ENCODE measurements at regions of chr4 and their contacts with region 1.

Region 1: DNA sequence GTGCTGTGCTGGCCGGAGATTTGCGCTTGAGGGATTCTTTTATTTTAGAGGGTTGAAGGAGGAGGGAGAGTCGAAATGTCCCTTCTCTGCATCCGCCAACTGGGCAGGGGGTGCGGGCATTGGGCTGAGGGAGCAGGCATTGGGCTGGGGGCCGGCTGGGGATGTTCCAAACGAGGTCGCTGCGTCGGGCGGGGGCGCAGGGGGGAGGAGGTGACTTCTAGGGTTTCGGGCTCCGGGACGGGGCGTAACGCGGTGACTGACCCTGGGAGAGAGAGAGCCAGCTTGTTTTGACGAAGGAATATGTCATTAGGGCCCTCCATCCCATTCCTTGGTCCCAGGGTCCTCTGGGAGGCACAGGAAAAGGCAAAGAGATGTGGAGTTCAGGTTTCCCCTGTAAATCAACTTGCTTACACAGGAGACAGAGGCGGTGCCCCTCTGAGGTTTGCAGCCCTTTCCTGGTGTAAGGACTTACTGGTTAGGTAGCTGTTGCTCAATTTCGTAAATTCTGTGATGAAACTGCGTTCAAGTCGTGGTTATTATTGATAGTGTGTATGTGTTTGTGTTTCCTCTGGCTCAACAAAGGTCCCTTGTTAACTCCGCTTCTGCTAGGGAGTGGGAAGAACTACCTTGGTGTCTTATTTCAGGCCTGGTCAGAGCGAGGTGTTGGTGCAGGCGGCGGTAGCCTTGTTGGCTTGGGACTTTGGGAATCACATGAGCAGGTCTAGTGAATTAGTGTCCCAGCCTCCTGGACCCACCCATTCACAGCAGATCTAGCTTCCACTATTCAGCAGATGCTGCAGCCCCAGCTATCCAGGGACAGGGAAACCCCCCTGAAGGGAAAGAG is 716 bp downstream of the FHIP1A start:
- DNase-seq: peak; percentile 75
- H3K4me3 Mint-ChIP-seq: peak overlapping the region; percentile 98
- H3K27ac Mint-ChIP-seq: peak overlapping the region; percentile 98
- H3K4me1 Mint-ChIP-seq: peaks cover 30% of the 10 kb centered on the region
- H3K27me3 Mint-ChIP-seq: no peaks in the 10 kb centered on the region
- CTCF ChIP-seq: no peak

Region 2: GRCh38 chr4:151147000-151147399 is 262.7 kb before region 1 on chr4:
- CTCF ChIA-PET with region 1: no interaction called
- intact Hi-C with region 1: no loop called
- DNase-seq: no peak
- H3K4me3 Mint-ChIP-seq: no peak overlapping the region
- H3K27ac Mint-ChIP-seq: no peak overlapping the region
- H3K4me1 Mint-ChIP-seq: no peaks in the 10 kb centered on the region
- H3K27me3 Mint-ChIP-seq: no peaks in the 10 kb centered on the region
- CTCF ChIP-seq: no peak

Region 3: DNA sequence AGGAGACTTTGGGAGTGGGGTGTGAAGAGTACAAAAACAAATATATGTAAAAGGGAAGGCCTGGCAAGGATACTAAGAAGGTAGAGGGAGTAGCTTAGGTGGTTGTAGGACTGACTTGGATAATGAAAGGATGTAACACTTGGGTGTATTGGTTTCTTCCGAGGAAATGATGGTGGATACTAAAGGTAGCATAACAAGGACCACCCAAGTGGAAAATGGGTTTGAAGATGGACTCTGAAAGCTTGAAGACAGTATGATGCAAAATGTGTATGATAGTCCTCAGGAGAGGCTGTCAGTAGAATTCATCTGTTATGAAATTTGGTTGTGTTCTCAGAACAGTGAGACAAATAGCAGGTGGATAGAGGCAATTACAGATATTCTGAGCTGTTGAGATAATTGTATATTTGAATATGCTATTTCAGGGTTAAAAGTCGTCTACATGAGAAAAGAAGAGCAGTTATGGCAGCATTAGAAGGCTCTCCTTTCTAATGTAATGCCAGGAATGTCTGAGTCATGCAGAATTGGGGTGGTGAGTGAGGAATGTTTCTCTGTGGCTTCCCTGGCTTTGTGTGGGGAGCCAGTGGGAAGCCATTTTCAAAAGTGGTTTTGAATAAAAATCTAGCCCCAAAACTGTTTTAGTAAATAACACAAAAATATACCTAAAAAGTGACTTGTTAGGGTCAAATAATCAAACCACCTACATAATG is 74.9 kb after region 1 on chr4:
- CTCF ChIA-PET with region 1: no interaction called
- intact Hi-C with region 1: loop called (anchors 5 kb)
- DNase-seq: peak; percentile 25
- H3K4me3 Mint-ChIP-seq: no peak overlapping the region
- H3K27ac Mint-ChIP-seq: peak overlapping the region; percentile 25
- H3K4me1 Mint-ChIP-seq: peaks cover 26% of the 10 kb centered on the region
- H3K27me3 Mint-ChIP-seq: no peaks in the 10 kb centered on the region
- CTCF ChIP-seq: no peak

Region 4: GRCh38 chr4:151604238-151604637 is 194.5 kb after region 1 on chr4:
- CTCF ChIA-PET with region 1: interaction called, 5 read pairs
- intact Hi-C with region 1: loop called (anchors 2 kb)
- DNase-seq: no peak
- H3K4me3 Mint-ChIP-seq: no peak overlapping the region
- H3K27ac Mint-ChIP-seq: no peak overlapping the region
- H3K4me1 Mint-ChIP-seq: peaks cover 8% of the 10 kb centered on the region
- H3K27me3 Mint-ChIP-seq: no peaks in the 10 kb centered on the region
- CTCF ChIP-seq: no peak